Gastrocnemius medialis (tissue), 4 donors: ENCODE measurements at regions of chr17 and their contacts with region 1.

Region 1: DNA sequence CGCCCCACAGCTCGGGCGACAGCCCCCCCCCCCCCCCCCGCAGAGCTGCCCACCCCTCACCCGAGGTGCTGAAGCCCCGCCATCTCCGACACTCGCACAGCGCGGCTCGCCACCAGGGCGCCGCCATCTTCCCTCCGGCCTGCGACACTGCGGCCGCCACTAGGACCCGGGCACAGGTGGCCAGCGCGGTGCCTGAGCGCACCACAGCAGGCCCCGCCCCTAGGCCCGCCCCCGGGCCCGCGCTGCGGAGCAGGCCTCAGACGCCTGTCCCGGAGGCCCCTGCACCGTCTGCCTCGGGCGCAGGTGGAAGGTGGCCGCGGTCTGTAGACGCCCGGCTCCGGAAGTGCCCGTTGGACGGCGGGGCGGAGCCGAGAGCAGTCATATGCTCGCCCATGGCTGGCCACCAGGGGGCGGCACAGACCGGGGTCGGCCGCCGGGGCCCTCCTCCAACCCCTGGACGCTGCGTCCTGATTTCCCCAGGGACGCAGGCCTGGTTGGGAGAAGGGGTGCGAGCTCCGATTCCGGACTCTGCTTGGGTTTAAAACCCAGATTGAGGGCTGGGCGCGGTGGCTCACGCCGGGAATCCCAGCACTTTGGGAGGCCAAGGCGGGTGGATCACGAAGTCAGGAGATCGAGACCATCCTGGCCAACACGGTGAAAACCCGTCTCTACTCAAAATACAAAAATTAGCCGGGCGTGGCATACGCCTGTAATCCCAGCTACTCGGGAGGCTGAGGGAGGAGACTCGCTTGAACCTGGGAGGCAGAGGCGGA is at the start of gene MRPL38:
- DNase-seq: peak; percentile 85 to 94
- ATAC-seq: peak; percentile 89 to 91
- H3K4me3 ChIP-seq: peak within 1 kb of the TSS; percentile 66 to 95 (median 83)
- H3K27ac ChIP-seq: peak within 1 kb of the TSS; percentile 92 to 95 (median 94)
- H3K4me1 ChIP-seq: peaks cover 12 to 21% of the 10 kb centered on the region in 2 donors
- H3K27me3 ChIP-seq: no peaks in the 10 kb centered on the region
- CTCF ChIP-seq: peak in 4 of 5 experiments; percentile 97 to 100 (median 100)
- POLR2A ChIP-seq: peak; percentile 66 to 67
- total RNA-seq, gene MRPL38: 29.9 to 86.7 (median 53.1) TPM

Region 2: DNA sequence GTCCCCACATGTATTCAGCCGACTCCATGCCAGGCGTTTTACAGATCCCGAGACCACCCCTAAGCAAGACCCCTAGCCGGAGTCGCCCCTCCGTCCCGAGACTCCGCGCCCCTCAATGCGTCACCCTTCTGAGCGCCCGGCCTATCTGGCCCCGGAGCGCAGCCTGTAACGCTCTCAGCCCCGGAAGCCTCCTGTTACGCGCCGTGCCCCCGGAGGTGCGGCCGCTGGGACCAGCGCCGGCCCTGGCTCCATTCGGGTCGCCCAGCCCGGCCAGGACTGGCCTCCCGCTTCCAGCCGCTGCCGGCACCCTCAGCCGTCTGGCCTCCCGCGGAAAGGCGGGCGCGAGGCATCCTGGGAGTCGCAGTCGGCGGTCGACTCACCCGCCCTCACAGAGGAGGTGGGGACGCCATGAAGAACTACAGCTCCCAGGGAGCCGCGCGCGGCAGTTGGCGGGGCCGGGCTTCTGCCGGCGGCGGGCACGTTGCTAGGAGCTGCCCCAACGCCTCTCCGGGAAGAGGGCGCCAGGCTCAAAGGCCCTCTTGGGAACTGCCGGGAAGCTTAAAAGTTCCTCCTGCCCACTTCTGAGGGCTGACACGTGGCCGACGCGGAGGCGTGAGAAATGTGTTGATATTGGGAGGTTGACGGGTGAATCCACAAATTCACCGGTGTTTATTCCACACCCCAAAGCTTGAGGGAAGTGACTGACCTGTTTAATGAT is 35.9 kb after region 1 on chr17 and contains the start of gene FBF1:
- in situ Hi-C with region 1: no loop called
- intact Hi-C with region 1: loop called (anchors 1 kb)
- DNase-seq: peak; percentile 90 to 93
- ATAC-seq: peak; percentile 92 to 97
- H3K4me3 ChIP-seq: peak within 1 kb of the TSS; percentile 72 to 99 (median 86)
- H3K27ac ChIP-seq: peak within 1 kb of the TSS; percentile 66 to 88 (median 78)
- H3K4me1 ChIP-seq: peaks cover 11 to 30% of the 10 kb centered on the region in 2 donors
- H3K27me3 ChIP-seq: no peaks in the 10 kb centered on the region
- CTCF ChIP-seq: peak in 2 of 5 experiments; percentile 15 to 18
- POLR2A ChIP-seq: peak; percentile 66 to 68
- total RNA-seq, gene FBF1: 2.5 to 6.4 (median 5.8) TPM

Region 3: DNA sequence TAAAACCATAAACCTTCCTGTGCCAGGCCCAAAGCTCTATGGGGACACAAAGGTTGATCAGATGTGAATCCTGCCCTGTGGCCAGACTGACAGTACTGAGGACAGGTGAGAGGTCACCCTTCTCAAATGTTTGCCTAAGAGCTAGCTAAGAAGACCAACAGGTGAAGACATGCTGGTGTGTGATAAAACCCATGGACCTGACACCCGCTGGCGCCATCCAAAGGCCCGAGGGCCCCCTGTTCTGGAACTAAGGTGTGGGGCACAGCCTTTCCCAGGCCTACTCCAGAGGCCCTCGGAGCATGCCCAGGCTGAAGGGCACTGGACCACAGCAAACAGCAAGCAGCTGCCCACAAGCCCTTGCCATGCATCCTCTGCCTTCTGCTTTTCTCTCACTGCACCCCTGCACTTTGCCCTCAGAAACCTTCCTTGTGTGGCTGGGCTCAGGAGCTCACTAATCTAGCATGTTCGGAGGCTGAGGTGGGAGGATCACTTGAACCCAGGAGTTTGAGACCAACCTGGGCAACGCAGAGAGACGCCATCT is 90.5 kb after region 1 on chr17:
- in situ Hi-C with region 1: no loop called
- intact Hi-C with region 1: no loop called
- DNase-seq: no peak
- ATAC-seq: no peak
- H3K4me3 ChIP-seq: no peak overlapping the region
- H3K27ac ChIP-seq: no peak overlapping the region
- H3K4me1 ChIP-seq: no peaks in the 10 kb centered on the region
- H3K27me3 ChIP-seq: no peaks in the 10 kb centered on the region
- CTCF ChIP-seq: no peak
- POLR2A ChIP-seq: no peak

Region 4: DNA sequence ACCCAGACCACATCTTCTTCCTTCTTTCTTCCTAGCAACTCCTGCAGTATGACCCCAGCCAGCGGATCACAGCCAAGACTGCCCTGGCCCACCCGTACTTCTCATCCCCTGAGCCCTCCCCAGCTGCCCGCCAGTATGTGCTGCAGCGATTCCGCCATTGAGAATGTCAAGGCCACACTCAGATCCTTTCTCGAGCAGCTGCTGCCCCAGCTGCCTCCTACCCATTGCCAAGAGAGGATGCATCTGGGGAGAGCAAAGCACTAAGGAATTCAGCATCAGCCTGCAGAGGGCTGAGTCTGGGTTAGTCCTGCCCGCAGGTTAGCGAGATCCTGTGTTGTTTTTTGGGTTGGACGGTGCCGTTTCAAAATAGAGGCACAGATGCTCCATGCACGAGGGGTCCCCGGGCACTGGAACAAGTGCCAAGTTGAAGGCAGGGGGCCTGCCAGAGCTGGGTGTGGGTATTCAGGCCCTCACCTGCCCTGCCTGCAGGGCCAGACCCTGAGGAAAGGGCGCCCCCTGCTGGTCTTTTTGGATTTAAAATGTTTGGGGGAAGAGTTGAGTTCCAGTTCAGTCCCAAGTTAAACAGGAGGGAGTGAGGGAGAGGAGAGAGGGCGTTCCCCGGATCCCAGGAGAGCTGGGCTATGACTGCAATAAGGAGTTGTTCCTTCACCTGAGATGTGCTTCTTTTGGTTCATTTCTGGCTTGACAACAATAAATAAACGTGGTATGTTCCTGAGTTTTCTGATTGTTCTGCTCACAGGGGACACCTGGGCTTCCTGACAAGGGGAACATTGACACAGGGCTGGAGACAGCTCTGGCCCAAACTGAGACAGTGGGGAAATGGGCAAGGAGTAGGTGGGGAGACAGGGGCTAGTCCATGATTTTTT is 100.6 kb after region 1 on chr17:
- in situ Hi-C with region 1: loop called (anchors 5 kb)
- intact Hi-C with region 1: loop called (anchors 1 kb)
- DNase-seq: peak; percentile 51 to 67
- ATAC-seq: peak; percentile 65 to 79
- H3K4me3 ChIP-seq: no peak overlapping the region
- H3K27ac ChIP-seq: peak overlapping the region in 1 of 4 donors; percentile 36
- H3K4me1 ChIP-seq: peaks cover 13 to 16% of the 10 kb centered on the region in 2 donors
- H3K27me3 ChIP-seq: no peaks in the 10 kb centered on the region
- CTCF ChIP-seq: peak; percentile 72 to 88 (median 81)
- POLR2A ChIP-seq: no peak